AG04450 (cell line): ENCODE measurements at regions of chr20 and their contacts with region 1.

Region 1: GRCh38 chr20:35092524-35093266 is at the start of gene TRPC4AP:
- DNase-seq: peak; percentile 65
- H3K4me3 ChIP-seq: peak within 1 kb of the TSS; percentile 93
- H3K27ac ChIP-seq: peak within 1 kb of the TSS; percentile 88
- H3K27me3 ChIP-seq: no peaks in the 10 kb centered on the region
- CTCF ChIP-seq: peak; percentile 90
- polyA plus RNA-seq, gene TRPC4AP: 85.4 and 94.0 TPM in 2 replicates

Region 2: GRCh38 chr20:35104685-35105295 is 12.1 kb after region 1 on chr20:
- CTCF ChIA-PET with region 1: interaction called, 39 read pairs
- POLR2A ChIA-PET with region 1: no interaction called
- DNase-seq: no peak
- H3K4me3 ChIP-seq: no peak overlapping the region
- H3K27ac ChIP-seq: no peak overlapping the region
- H3K27me3 ChIP-seq: no peaks in the 10 kb centered on the region
- CTCF ChIP-seq: no peak

Region 3: DNA sequence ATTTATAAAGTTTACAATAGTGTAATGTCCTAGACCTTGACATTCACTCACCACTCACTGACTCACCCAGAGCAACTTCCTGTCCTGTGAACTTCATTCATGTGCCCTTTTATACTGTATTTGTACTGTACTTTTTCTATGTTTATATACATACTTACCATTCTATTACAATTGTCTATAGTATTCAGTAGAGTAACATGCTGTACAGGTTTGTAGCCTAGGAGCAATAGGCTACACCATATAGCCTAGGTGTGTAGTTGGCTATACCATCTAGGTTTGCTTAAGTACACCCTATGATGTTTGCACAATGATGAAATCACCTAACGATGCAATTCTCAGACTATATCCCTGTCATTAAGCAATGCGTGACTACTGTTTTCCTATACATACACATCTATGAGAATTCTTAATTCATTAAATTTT is 37.0 kb after region 1 on chr20:
- CTCF ChIA-PET with region 1: interaction called, 14 read pairs
- POLR2A ChIA-PET with region 1: no interaction called
- DNase-seq: no peak
- H3K4me3 ChIP-seq: no peak overlapping the region
- H3K27ac ChIP-seq: no peak overlapping the region
- H3K27me3 ChIP-seq: no peaks in the 10 kb centered on the region
- CTCF ChIP-seq: no peak

Region 4: DNA sequence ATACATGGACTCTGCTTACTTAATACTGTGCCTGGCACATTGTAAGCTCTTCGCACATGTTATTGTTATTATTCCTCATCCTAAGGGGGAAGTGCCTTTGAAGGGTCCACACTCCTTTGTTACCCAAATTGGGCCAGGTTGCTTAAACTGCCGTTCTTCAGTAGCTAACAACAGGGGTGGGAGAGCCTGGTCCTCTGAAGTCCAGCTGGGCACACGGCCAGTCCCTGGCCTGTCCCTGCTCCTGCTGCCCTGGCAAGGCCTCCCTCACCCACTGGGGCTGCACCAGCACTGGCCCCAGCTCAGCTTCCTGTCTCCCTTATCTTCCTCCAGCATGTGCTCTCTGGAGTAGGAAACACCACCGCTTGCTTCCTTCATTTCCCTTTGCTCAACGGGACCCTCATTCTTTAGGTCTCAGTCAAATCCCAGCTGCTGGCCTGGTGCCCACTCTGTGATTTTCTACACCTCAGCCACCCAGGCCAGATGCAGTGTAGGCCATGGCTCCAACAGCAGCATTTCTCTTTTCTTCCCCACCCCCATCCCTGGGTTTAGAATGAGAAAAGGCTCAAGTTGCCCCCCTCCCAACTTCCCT is 73.6 kb after region 1 on chr20:
- CTCF ChIA-PET with region 1: interaction called, 11 read pairs
- POLR2A ChIA-PET with region 1: no interaction called
- DNase-seq: no peak
- H3K4me3 ChIP-seq: no peak overlapping the region
- H3K27ac ChIP-seq: no peak overlapping the region
- H3K27me3 ChIP-seq: no peaks in the 10 kb centered on the region
- CTCF ChIP-seq: no peak

Region 5: DNA sequence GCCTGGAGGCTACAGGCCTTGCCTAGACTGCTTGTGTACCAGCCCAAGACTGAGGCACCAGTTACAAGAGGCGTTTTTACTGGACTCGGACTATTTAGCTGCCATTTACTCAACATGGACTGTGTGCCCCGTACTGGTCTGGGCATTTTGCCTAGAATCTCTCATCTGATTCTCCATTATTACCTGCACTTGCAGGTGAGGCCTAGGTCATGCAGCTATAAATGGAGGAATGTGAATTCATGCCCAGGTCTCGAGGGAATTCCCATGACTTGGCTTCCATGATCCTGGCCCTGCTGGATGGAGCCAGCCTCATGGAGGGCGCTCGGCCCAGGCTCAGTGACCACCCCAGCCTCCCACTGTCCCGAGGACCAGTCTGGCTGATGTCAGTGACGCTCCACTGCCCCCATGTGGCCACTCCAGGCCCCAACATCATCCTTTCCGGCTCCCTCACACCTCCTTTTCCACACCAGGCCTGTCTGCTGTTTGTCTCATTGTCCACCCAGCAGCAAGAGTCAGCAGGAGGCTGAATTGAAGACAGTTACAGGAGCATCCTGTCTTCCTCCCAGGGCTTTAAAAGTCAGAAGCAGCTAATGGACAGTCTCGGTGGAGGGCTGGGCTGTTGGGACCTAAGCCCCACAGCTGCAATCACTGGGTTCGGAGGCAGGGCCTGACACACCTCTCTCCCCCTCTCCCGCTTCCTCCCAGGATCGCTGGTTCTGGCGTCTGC is 176.5 kb after region 1 on chr20:
- CTCF ChIA-PET with region 1: interaction called, 37 read pairs
- POLR2A ChIA-PET with region 1: interaction called, 4 read pairs
- DNase-seq: no peak
- H3K4me3 ChIP-seq: no peak overlapping the region
- H3K27ac ChIP-seq: no peak overlapping the region
- H3K27me3 ChIP-seq: no peaks in the 10 kb centered on the region
- CTCF ChIP-seq: peak; percentile 84

Region 6: DNA sequence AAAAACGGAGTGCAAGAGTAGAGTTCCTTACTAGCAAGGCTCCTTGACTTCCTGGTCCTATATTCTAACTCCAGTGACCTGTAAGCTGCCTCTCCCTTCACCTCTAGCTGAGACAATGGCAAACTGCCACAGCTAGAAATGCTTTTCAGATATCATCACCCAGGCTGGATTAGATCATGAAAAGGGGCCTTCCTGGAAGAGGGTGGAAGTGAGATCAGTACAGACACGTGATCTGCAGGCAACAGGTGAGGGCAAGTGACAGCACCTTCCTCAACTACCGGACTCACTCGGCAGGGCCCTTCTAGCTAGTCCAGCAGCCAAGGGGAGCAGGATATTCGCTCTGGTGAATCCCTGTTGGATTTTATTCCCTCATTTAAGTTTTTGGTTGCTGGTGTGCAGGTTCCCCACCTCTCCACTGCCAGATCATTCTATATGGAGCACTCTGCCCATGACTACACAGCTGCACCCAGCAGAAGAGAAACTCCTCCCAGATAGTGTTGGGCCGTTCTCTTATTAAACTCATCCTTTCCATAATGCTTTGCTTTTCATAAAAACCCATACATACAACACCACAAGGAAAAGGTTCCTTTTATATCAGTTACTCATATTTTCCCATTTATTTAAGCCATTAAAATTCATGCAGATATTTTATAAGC is 225.9 kb after region 1 on chr20:
- CTCF ChIA-PET with region 1: no interaction called
- POLR2A ChIA-PET with region 1: no interaction called
- DNase-seq: no peak
- H3K4me3 ChIP-seq: no peak overlapping the region
- H3K27ac ChIP-seq: peak overlapping the region; percentile 93
- H3K27me3 ChIP-seq: no peaks in the 10 kb centered on the region
- CTCF ChIP-seq: no peak

Region 7: GRCh38 chr20:35849706-35850105 is 757.0 kb after region 1 on chr20:
- CTCF ChIA-PET with region 1: no interaction called
- POLR2A ChIA-PET with region 1: no interaction called
- DNase-seq: no peak
- H3K4me3 ChIP-seq: no peak overlapping the region
- H3K27ac ChIP-seq: no peak overlapping the region
- H3K27me3 ChIP-seq: no peaks in the 10 kb centered on the region
- CTCF ChIP-seq: no peak